ENCODE measurements at regions of chr3 and their contacts with region 1.

Region 1: DNA sequence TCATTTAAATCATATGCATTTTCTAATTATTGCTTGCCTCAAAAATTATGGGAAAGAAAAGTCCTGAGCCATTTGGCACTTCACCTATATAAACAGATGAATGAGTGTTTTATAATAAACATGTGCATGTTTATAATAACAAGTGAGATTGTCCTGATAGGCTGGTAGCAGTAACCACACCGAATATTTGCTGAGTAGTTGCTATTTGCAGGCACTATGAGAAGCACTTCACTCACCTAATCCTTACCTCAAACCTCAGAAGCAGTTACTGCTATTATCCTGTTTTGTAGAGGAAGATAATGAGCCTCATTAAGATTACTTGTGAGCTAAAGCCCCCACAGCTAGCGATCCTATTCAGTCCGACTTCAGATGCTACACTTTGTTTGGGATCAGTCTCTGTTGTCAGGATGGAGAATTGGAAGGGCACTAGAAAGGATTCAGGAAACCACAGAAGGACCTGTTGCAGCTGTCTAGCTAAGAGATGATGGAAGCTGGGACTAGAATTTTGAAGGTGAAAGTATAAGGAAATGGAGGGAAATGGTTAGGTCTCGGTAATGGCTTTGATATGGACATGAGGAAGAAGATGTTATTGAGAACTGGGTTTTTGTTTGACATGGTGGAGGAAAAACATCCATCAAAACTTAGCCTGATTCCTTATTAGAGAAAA is 28.4 kb upstream of the MAGI1 start:
- DNase-seq: no peak
- H3K4me3 ChIP-seq: no peak overlapping the region
- CTCF ChIP-seq: no peak
- POLR2A ChIP-seq: no peak

Region 2: GRCh38 chr3:66083784-66084213 is 16.7 kb after region 1 on chr3:
- intact Hi-C with region 1: no loop called
- DNase-seq: no peak
- H3K4me3 ChIP-seq: no peak overlapping the region
- CTCF ChIP-seq: no peak
- POLR2A ChIP-seq: no peak

Region 3: GRCh38 chr3:66276705-66277274 is 209.7 kb after region 1 on chr3:
- intact Hi-C with region 1: no loop called
- DNase-seq: peak in 1 of 2 donors; percentile 69
- H3K4me3 ChIP-seq: no peak overlapping the region
- CTCF ChIP-seq: no peak
- POLR2A ChIP-seq: no peak

Region 4: DNA sequence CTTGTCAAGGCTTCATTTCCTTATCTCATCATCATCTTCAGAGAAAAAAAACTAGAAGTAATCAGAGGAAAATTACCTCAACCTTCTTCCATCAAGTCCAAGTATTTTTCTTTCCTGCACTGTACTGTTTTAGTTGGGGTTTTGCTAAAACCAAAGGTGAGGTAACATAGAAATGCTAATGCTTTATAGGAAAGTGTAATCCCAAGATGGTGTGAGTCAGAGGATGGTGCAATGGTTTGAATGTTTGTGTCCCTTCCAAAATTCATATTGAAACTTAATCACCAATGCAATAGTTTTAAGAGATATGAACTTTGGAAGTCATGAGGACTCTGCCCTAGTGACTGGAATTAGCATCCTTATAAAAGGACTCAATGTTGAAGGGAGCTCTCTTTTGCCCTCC is 1010.6 kb after region 1 on chr3:
- intact Hi-C with region 1: no loop called
- DNase-seq: no peak
- H3K4me3 ChIP-seq: no peak overlapping the region
- CTCF ChIP-seq: no peak
- POLR2A ChIP-seq: no peak

Region 5: DNA sequence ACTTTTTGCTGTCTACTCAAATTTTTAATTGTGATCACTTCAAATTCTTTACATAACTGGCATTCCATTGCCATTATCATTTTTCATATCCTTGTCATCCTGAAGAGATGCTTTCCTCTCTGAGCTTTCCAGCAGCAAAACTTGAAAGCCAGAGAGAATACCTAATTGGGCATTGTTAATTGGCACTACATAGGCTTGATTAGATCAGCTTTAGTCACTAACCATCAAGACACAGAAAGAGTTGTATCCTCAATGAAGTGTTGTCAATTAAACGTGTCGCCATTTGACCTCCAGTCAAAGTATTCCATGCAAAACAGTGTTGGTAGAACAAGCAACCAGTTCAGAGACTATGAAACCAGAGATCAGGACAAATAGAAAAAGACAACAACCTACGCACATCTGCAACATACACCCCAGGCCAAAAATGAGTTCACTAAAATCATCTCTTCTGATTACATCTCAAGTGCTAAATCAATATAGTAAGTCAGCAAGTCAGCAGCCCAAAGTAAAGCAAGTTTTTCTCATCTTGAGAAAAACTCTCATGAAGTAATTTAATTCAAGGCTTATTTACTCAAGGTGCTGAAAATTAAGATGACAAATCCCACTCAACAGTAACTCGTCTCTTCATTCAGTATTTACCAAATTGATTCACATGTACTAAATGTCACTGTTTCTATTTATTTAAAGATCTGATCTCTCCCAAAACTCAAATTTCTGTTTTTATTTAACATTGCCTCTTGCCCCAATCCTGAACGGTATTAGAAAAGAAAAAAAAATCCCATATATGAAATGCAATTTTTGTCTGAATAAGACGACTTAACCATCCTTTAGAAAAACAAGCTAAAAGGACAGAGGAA is 1464.4 kb after region 1 on chr3:
- intact Hi-C with region 1: loop called (anchors 5 kb)
- DNase-seq: no peak
- H3K4me3 ChIP-seq: no peak overlapping the region
- CTCF ChIP-seq: no peak
- POLR2A ChIP-seq: no peak